ENCODE measurements at regions of chr9 and their contacts with region 1.

Region 1: GRCh38 chr9:96418074-96418809 is at the start of gene ZNF367:
- DNase-seq: peak; percentile 98
- H3K4me3 ChIP-seq: peak within 1 kb of the TSS; percentile 75 to 84 (median 83)
- H3K27ac ChIP-seq: peak within 1 kb of the TSS; percentile 92
- H3K4me1 ChIP-seq: peaks cover 27% of the 10 kb centered on the region
- H3K27me3 ChIP-seq: no peaks in the 10 kb centered on the region
- CTCF ChIP-seq: no peak
- POLR2A ChIP-seq: peak; percentile 15
- total RNA-seq, gene ZNF367: 8.6 and 10.0 TPM in 2 replicates

Region 2: GRCh38 chr9:96344458-96345180 is 73.6 kb before region 1 on chr9:
- CTCF ChIA-PET with region 1: no interaction called
- POLR2A ChIA-PET with region 1: no interaction called
- dilution Hi-C with region 1: no loop called
- intact Hi-C with region 1: loop called (anchors 1 kb)
- DNase-seq: peak; percentile 83
- H3K4me3 ChIP-seq: no peak overlapping the region
- H3K27ac ChIP-seq: peak overlapping the region; percentile 51
- H3K4me1 ChIP-seq: peaks cover 18% of the 10 kb centered on the region
- H3K27me3 ChIP-seq: no peaks in the 10 kb centered on the region
- CTCF ChIP-seq: no peak
- POLR2A ChIP-seq: no peak

Region 3: DNA sequence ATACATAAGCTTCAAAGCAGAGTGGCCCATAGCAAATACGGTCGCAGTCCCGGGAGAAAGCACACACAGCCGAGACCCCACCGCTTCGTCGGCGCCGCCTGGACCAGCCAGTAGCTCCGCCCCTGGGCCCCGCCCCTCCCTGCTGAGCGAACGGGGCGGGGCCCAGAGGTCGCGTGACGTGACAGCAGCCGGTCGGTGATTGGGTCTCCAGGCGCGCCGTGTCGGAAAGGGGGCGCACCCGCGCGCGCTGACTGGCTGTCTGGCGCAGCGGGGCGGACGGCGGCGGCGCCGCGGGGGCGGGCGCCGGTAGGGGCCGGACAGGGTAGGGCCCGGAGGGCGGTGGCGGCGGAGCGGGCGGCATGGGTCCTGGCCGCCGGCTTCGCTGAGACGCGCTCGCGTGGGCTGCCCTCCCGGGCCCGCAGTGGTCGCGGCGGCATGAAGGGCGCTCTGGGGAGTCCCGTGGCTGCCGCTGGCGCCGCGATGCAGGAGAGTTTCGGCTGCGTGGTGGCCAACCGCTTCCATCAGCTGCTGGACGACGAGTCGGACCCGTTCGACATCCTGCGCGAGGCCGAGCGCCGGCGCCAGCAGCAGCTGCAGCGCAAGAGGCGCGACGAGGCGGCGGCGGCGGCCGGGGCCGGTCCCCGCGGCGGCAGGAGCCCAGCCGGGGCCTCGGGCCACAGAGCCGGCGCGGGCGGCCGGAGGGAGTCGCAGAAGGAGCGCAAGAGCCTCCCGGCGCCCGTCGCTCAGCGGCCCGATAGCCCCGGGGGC is 31.8 kb after region 1 on chr9 and contains the start of gene HABP4:
- CTCF ChIA-PET with region 1: interaction called, 3 read pairs
- POLR2A ChIA-PET with region 1: no interaction called
- dilution Hi-C with region 1: no loop called
- intact Hi-C with region 1: loop called (anchors 1 kb)
- DNase-seq: peak; percentile 93
- H3K4me3 ChIP-seq: peak within 1 kb of the TSS; percentile 50 to 66 (median 63)
- H3K27ac ChIP-seq: peak within 1 kb of the TSS; percentile 65
- H3K4me1 ChIP-seq: peaks cover 7% of the 10 kb centered on the region
- H3K27me3 ChIP-seq: peaks cover 0 to 2% of the 10 kb centered on the region in 2 experiments
- CTCF ChIP-seq: no peak
- POLR2A ChIP-seq: peak; percentile 54
- total RNA-seq, gene HABP4: 11.1 and 11.7 TPM in 2 replicates

Region 4: DNA sequence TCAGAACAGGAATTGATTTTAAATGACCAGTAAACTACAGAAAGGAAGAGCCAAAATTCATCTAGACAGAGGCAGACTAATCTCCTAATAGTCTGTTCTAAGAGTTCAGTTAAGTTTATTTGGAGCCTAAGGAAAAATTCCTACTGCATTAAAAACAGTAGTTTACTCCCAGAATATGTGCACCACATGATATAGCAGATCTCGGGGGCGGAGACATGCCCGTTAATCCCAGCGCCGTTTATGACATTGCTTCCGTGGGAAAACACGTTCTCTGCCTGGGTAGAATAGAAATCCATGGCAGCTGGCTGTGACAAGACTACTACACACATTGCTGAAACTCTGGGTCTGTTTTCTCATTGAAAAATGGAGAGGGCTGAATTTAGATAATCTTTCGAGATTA is 43.1 kb after region 1 on chr9:
- CTCF ChIA-PET with region 1: no interaction called
- POLR2A ChIA-PET with region 1: no interaction called
- dilution Hi-C with region 1: no loop called
- intact Hi-C with region 1: no loop called
- DNase-seq: no peak
- H3K4me3 ChIP-seq: no peak overlapping the region
- H3K27ac ChIP-seq: no peak overlapping the region
- H3K4me1 ChIP-seq: no peaks in the 10 kb centered on the region
- H3K27me3 ChIP-seq: no peaks in the 10 kb centered on the region
- CTCF ChIP-seq: no peak
- POLR2A ChIP-seq: no peak

Region 5: GRCh38 chr9:96523374-96523773 is 105.1 kb after region 1 on chr9:
- CTCF ChIA-PET with region 1: no interaction called
- POLR2A ChIA-PET with region 1: no interaction called
- dilution Hi-C with region 1: no loop called
- intact Hi-C with region 1: no loop called
- DNase-seq: no peak
- H3K4me3 ChIP-seq: no peak overlapping the region
- H3K27ac ChIP-seq: no peak overlapping the region
- H3K4me1 ChIP-seq: no peaks in the 10 kb centered on the region
- H3K27me3 ChIP-seq: peaks cover 0 to 2% of the 10 kb centered on the region in 2 experiments
- CTCF ChIP-seq: no peak
- POLR2A ChIP-seq: no peak

Region 6: GRCh38 chr9:96654443-96655197 is 236.4 kb after region 1 on chr9:
- CTCF ChIA-PET with region 1: interaction called, 3 read pairs
- POLR2A ChIA-PET with region 1: no interaction called
- dilution Hi-C with region 1: no loop called
- intact Hi-C with region 1: loop called (anchors 1 kb)
- DNase-seq: peak; percentile 89
- H3K4me3 ChIP-seq: peak overlapping the region; percentile 39 to 51 (median 50)
- H3K27ac ChIP-seq: peak overlapping the region; percentile 64
- H3K4me1 ChIP-seq: peaks cover 6% of the 10 kb centered on the region
- H3K27me3 ChIP-seq: no peaks in the 10 kb centered on the region
- CTCF ChIP-seq: no peak
- POLR2A ChIP-seq: no peak

Region 7: DNA sequence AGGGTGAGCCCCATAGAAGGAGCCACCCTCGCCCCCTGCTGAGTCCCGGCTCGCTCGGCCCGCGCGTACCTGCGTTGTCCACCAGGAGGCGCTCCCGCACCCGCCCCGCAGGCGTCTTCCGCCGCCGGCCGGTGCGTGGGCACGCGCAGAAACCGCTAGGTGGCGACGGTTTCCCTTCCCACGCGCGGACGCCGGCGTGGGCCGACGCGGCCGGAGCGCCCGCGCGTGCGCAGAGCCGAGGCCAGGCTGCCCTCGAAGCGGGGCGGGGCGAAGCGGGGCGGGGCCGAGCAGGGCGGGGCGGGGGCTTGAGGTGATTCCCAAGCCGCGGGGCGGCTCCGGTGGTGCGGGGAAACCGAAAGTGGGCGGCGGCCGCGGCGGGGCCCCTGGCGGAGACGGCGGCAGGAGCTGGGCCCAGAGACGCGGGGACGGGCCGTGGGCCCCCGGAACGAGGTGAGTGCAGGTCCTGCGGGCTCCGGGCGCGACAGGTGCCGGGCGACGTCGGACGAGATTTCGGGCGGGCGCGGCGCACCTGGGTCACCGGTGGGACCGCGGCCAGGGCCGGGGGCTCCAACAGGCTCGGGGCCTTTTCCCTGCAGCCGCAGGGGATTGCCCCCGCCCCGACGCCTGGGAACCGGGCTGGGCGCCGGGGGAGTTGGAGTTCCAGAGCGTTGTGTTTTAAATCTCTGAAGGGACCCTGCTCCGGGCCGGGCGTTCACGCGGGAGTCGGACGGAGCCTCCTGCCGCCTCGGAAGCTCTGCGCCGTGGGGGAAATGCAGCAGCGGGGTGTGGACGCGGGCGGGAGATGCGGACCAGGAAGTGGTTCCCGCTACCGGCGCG is 993.8 kb after region 1 on chr9 and contains the start of gene TDRD7:
- CTCF ChIA-PET with region 1: no interaction called
- POLR2A ChIA-PET with region 1: no interaction called
- dilution Hi-C with region 1: no loop called
- intact Hi-C with region 1: loop called (anchors 10 kb)
- DNase-seq: peak; percentile 82
- H3K4me3 ChIP-seq: peak within 1 kb of the TSS; percentile 73 to 92 (median 90)
- H3K27ac ChIP-seq: peak within 1 kb of the TSS; percentile 11
- H3K4me1 ChIP-seq: peaks cover 8% of the 10 kb centered on the region
- H3K27me3 ChIP-seq: peaks cover 23 to 29% of the 10 kb centered on the region in 2 experiments
- CTCF ChIP-seq: peak; percentile 99
- POLR2A ChIP-seq: no peak
- total RNA-seq, gene TDRD7: 11.2 and 11.5 TPM in 2 replicates